Mammary epithelial cell (primary cell): ENCODE measurements at regions of chr5 and their contacts with region 1.

Region 1: GRCh38 chr5:108260117-108260857 is 121.6 kb downstream of the FBXL17 start:
- DNase-seq: peak; percentile 59
- H3K4me3 ChIP-seq: no peak overlapping the region
- H3K27ac ChIP-seq: no peak overlapping the region
- H3K4me1 ChIP-seq: no peaks in the 10 kb centered on the region
- H3K27me3 ChIP-seq: no peaks in the 10 kb centered on the region
- CTCF ChIP-seq: peak; percentile 93 to 95

Region 2: DNA sequence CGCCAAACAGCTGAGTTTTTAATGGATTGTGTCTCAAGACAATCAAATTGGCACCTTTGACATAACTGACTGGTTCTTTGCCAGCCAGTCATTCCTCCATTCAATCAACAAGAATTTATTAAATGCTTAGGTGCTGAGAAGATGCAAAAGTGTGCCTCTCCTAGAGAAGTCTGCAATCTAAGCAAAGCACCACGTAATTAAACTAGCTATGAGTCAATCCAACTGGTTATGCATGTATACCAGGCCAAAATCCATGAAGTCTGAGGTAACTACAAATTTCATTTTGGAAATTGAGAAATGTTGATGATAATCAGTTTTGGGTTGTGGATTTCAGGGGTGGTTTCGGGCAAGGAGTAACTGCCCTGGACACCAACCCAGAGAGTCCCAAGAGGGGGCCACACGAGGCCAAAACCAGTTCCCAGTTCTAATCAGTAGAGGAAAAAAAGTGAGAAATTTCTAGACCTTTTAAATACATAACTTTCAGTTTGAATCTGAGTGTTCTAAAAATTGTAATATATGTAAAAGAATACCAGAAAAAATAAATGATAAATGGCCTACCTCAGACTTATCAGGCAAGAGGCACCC is 682.1 kb before region 1 on chr5:
- CTCF ChIA-PET with region 1: interaction called, 11 read pairs
- dilution Hi-C with region 1: no loop called
- in situ Hi-C with region 1: no loop called
- intact Hi-C with region 1: no loop called
- DNase-seq: peak; percentile 86
- H3K4me3 ChIP-seq: no peak overlapping the region
- H3K27ac ChIP-seq: peak overlapping the region; percentile 77
- H3K4me1 ChIP-seq: peaks cover 36% of the 10 kb centered on the region
- H3K27me3 ChIP-seq: no peaks in the 10 kb centered on the region
- CTCF ChIP-seq: no peak

Region 3: GRCh38 chr5:107680099-107680498 is 580.2 kb before region 1 on chr5:
- CTCF ChIA-PET with region 1: no interaction called
- dilution Hi-C with region 1: no loop called
- in situ Hi-C with region 1: no loop called
- intact Hi-C with region 1: loop called (anchors 5 kb)
- DNase-seq: peak; percentile 62
- H3K4me3 ChIP-seq: no peak overlapping the region
- H3K27ac ChIP-seq: no peak overlapping the region
- H3K4me1 ChIP-seq: no peaks in the 10 kb centered on the region
- H3K27me3 ChIP-seq: no peaks in the 10 kb centered on the region
- CTCF ChIP-seq: no peak

Region 4: DNA sequence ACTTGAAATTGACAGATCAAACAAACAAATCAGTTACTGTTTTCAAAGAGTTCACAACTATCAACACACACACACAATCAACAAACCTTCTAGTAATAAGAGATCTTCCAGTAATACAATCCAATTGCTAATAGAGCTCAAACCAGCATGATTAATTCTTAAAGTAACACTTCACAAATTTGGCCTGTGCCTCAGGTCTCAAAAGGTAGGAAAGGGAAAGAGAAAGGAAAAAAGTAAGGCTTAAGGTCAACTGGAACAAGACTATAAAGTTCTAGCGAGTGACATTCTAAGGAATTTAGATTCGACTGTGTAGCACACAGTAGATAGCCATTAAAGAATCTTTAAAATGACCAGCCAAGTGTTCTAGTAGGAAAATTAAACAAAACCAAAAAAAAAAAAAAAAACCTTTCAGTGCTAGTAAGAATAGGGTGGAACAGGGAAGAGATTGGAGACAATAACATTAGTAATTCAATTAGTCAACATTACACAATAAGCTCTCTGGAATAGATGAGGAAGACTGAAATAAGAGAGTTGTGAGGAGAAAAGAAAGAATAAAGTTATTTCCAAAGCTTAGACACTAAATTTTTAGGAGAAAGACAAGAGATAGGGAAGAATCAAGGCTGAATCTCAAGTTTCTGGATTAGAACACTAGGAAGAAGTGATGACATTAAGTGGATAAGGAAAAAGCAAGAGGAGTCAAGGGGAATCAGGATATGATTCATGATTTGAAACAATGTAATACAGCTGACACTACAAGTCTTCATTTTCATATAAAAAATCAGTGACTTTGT is 35.5 kb after region 1 on chr5:
- CTCF ChIA-PET with region 1: no interaction called
- dilution Hi-C with region 1: no loop called
- in situ Hi-C with region 1: no loop called
- intact Hi-C with region 1: loop called (anchors 2 kb)
- DNase-seq: peak; percentile 56
- H3K4me3 ChIP-seq: peak overlapping the region in 2 of 3 experiments; percentile 17 to 23
- H3K27ac ChIP-seq: peak overlapping the region; percentile 49
- H3K4me1 ChIP-seq: peaks cover 8% of the 10 kb centered on the region
- H3K27me3 ChIP-seq: no peaks in the 10 kb centered on the region
- CTCF ChIP-seq: no peak

Region 5: DNA sequence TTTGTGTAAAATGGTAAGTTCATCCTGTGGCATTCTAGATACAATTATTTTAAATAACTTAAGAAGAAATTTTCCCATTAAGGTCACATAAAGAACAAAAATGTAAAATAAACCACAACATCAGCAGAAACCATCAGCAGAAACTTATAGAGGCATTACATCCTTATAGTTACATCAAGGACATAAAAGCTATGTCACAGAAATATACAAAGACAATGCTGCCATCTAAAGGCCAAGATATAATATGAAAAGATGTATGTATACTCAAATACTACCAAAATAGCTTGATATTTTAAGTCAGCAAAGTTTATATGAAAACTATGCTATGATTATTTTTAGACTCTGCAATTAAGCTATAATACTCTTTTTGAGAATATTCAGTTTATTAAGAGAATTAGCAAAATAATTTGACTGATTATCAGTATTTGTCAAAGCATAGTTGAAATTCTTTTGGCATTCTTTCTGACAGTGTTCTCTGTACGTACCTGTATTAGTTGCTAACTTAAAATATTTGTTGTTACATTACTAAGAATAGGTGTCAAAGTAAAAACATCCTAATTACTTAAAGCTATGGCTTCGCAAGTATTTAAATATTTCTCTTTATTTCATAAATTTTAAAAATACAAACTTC is 85.4 kb after region 1 on chr5:
- CTCF ChIA-PET with region 1: interaction called, 9 read pairs
- dilution Hi-C with region 1: no loop called
- in situ Hi-C with region 1: loop called (anchors 5 to 10 kb)
- intact Hi-C with region 1: loop called (anchors 1 kb)
- DNase-seq: peak; percentile 28
- H3K4me3 ChIP-seq: no peak overlapping the region
- H3K27ac ChIP-seq: no peak overlapping the region
- H3K4me1 ChIP-seq: no peaks in the 10 kb centered on the region
- H3K27me3 ChIP-seq: no peaks in the 10 kb centered on the region
- CTCF ChIP-seq: peak; percentile 27 to 34

Region 6: GRCh38 chr5:108924457-108924961 is 664.2 kb after region 1 on chr5:
- CTCF ChIA-PET with region 1: no interaction called
- dilution Hi-C with region 1: no loop called
- in situ Hi-C with region 1: no loop called
- intact Hi-C with region 1: no loop called
- DNase-seq: no peak
- H3K4me3 ChIP-seq: no peak overlapping the region
- H3K27ac ChIP-seq: no peak overlapping the region
- H3K4me1 ChIP-seq: no peaks in the 10 kb centered on the region
- H3K27me3 ChIP-seq: no peaks in the 10 kb centered on the region
- CTCF ChIP-seq: peak in 1 of 2 donors; percentile 3

Region 7: DNA sequence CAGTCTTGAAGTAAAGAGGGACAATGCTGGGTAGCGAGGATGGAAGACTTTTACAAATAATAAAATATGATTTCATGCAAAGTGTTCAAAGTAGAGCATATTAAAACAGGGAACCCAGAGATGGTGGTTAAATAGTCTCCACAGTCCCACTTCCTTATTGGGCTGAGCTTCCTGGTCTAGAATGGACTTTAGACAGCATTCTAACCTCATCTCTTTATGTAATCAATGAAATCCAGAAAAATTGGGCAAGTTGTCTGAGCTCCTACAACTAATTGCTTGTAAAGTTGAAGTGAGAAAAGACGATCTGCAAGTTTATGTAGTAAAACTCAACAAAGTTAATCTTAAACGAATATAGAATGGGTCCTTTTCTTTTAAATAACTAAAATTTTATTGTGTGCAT is 820.6 kb after region 1 on chr5:
- CTCF ChIA-PET with region 1: no interaction called
- dilution Hi-C with region 1: no loop called
- in situ Hi-C with region 1: no loop called
- intact Hi-C with region 1: no loop called
- DNase-seq: no peak
- H3K4me3 ChIP-seq: no peak overlapping the region
- H3K27ac ChIP-seq: no peak overlapping the region
- H3K4me1 ChIP-seq: no peaks in the 10 kb centered on the region
- H3K27me3 ChIP-seq: no peaks in the 10 kb centered on the region
- CTCF ChIP-seq: no peak